ENCODE measurements at regions of chr15 and their contacts with region 1.

Region 1: GRCh38 chr15:31004220-31004733 is 12.8 kb upstream of the MTMR10 start:
- DNase-seq: peak; percentile 61
- H3K4me3 Mint-ChIP-seq: peak overlapping the region; percentile 46
- H3K27ac Mint-ChIP-seq: peak overlapping the region; percentile 77
- H3K4me1 Mint-ChIP-seq: peaks cover 39% of the 10 kb centered on the region
- H3K27me3 Mint-ChIP-seq: peaks cover 52% of the 10 kb centered on the region

Region 2: GRCh38 chr15:30991255-30992072 is 12.8 kb before region 1 on chr15 and contains the start of gene MTMR10:
- CTCF ChIA-PET with region 1: interaction called, 4 read pairs
- POLR2A ChIA-PET with region 1: interaction called, 26 read pairs
- DNase-seq: peak; percentile 81
- H3K4me3 Mint-ChIP-seq: peak within 1 kb of the TSS; percentile 96
- H3K27ac Mint-ChIP-seq: peak within 1 kb of the TSS; percentile 88
- H3K4me1 Mint-ChIP-seq: peaks cover 30% of the 10 kb centered on the region
- H3K27me3 Mint-ChIP-seq: peaks cover 9% of the 10 kb centered on the region
- total RNA-seq, gene MTMR10: 21.8 to 23.3 TPM

Measured in activated CD4-positive, alpha-beta memory T cell treated with anti-CD3 and anti-CD28 coated beads, Interleukin-2, amount 10 ng/mL, durations not matched to agents 7 days and 5 days (primary cell).